ENCODE measurements at regions of chr14 and their contacts with region 1.

Region 1: DNA sequence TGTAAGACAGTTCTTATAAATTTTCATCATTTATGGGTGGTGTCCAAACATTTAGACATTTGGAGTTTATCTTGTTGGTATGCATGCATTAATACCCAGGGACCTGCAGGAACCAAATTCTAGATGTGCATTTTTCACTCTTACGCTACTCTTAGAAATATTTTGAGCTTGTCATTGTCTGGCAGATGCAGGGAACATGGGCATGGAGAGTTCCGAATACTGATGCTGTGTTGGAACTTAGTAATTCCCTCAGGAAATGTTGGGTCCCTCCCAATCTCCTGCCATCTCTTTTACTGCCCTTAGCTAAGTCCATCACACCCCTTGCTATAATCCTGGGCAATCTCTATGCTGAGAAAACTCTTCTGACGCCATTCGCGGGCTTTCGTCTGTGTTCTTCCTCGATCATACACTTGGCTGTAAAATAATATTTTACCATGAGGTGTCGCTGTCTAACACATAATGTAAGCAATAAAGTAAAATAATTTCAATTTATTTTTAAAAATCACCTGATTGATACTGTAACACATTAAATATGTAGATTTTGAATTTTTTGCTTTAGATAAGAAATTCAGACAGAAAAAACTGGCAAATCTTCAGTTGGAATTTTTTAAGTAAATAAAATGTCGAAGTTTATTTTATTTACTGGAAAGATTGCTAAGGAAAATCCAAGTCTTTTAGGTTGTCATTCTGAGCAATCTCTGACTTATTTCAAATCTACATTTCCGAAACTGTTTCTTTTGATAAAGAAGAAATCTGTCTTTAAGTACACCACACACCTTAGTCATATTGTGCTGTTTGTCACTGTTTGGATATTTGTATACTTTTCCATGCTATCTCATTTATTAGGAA is 304.1 kb upstream of the SSTR1 start:
- DNase-seq: peak; percentile 59
- ATAC-seq: peak; percentile 72
- H3K4me3 ChIP-seq: no peak overlapping the region
- H3K27ac ChIP-seq: no peak overlapping the region
- H3K4me1 ChIP-seq: 0 out of 2 replicates have a peak, but pooled peaks cover 2% of the 10 kb centered on the region
- H3K27me3 ChIP-seq: no peaks in the 10 kb centered on the region; the same call in 1 of the 2 replicates
- CTCF ChIP-seq: peak; percentile 77
- POLR2A ChIP-seq: no peak
- RAD21 ChIP-seq: peak; percentile 76

Region 2: DNA sequence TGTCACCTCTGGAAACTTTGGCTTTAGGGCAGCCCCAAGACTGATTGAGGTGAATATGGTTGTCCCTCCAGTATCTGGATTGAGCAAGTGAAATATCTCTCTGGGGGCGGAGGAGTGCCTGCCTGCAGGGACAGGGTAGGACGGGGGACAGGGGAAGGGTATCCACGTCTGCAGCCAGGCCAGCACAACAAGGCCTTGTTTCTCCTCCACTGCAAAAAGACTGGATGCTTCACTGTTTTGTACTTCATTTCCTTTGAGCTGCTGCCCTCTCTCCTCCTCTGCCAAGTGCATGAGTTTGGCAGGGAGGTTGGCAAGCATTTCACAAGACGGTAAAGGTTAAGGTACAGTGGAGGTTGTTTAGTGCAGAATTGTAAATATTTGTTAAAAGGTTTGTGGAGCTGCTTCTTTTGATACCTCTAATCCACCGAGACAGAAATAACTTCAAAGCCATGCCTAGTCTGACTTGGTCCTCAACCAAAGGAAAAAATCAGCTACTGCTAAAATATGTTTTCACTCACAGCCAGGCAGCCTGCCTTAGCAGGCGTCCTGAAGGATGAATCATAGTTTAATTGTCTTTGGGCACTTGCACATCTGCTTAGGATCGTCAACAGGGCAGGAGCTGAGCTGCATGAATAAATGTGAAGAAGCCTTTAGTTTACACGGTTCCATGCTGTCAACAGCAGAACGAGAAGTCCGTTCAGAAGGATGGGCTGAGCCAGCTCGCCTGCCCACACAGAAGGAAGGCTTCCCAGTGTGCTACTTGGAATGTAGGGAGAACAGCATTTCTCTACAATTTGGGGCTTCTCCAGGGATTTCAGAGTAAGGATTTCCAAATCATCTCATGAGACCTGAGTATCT is 38.5 kb before region 1 on chr14:
- CTCF ChIA-PET with region 1: no interaction called
- POLR2A ChIA-PET with region 1: no interaction called
- dilution Hi-C with region 1: no loop called
- in situ Hi-C with region 1: no loop called
- intact Hi-C with region 1: no loop called
- DNase-seq: peak; percentile 7
- ATAC-seq: peak; percentile 56
- H3K4me3 ChIP-seq: no peak overlapping the region
- H3K27ac ChIP-seq: no peak overlapping the region
- H3K4me1 ChIP-seq: no peaks in the 10 kb centered on the region
- H3K27me3 ChIP-seq: peaks cover 2% of the 10 kb centered on the region
- CTCF ChIP-seq: no peak
- POLR2A ChIP-seq: no peak
- RAD21 ChIP-seq: no peak

Region 3: GRCh38 chr14:37890095-37890494 is 13.5 kb before region 1 on chr14:
- CTCF ChIA-PET with region 1: no interaction called
- POLR2A ChIA-PET with region 1: no interaction called
- dilution Hi-C with region 1: no loop called
- in situ Hi-C with region 1: no loop called
- intact Hi-C with region 1: no loop called
- DNase-seq: no peak
- ATAC-seq: no peak
- H3K4me3 ChIP-seq: no peak overlapping the region
- H3K27ac ChIP-seq: no peak overlapping the region
- H3K4me1 ChIP-seq: no peaks in the 10 kb centered on the region
- H3K27me3 ChIP-seq: peaks cover 2% of the 10 kb centered on the region; the same call in 1 of the 2 replicates
- CTCF ChIP-seq: peak; percentile 29
- POLR2A ChIP-seq: no peak
- RAD21 ChIP-seq: no peak

Region 4: GRCh38 chr14:38208618-38209562 is 305.3 kb after region 1 on chr14:
- CTCF ChIA-PET with region 1: no interaction called
- POLR2A ChIA-PET with region 1: no interaction called
- dilution Hi-C with region 1: no loop called
- in situ Hi-C with region 1: loop called (anchors 10 kb)
- intact Hi-C with region 1: no loop called
- DNase-seq: peak; percentile 74
- ATAC-seq: peak; percentile 79
- H3K4me3 ChIP-seq: peak overlapping the region; percentile 61
- H3K27ac ChIP-seq: peak overlapping the region; percentile 8; the same call in 1 of the 2 replicates
- H3K4me1 ChIP-seq: peaks cover 11% of the 10 kb centered on the region; the same call in 1 of the 2 replicates
- H3K27me3 ChIP-seq: no peaks in the 10 kb centered on the region
- CTCF ChIP-seq: peak; percentile 53
- POLR2A ChIP-seq: no peak
- RAD21 ChIP-seq: peak; percentile 63

Region 5: DNA sequence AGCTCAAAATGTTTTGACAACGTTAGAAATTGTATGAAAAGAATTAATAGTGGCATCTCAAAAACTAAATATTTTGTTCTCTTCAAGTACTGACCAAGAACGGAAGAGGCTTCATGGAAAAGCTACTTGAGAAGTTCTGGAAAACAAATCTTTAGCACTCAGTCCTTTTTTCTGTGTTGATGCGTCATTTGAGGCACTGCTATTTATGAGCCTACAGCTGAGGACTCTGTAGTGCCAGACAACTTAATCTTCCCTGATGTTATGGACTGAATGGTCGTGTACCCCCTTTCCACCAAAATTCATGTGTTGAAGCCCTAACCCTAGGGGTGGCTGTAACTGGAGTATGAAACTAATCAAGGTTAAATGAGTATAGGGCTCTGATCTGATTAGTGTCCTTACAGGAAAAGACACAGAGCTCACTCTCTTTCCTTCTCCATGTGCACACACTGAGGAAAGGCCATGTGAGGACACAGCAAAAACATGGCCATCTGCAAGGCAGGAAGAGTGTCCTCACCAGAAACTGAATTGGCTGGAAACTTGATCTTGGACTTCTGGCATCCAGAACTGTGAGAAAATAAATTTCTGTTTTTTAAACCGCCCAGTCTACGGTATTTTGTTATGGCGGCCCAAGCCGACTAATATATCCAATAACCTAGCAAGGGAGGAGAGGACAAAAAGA is 689.3 kb after region 1 on chr14:
- CTCF ChIA-PET with region 1: no interaction called
- POLR2A ChIA-PET with region 1: no interaction called
- dilution Hi-C with region 1: no loop called
- in situ Hi-C with region 1: loop called (anchors 5 kb)
- intact Hi-C with region 1: no loop called
- DNase-seq: no peak
- ATAC-seq: no peak
- H3K4me3 ChIP-seq: no peak overlapping the region
- H3K27ac ChIP-seq: no peak overlapping the region
- H3K4me1 ChIP-seq: no peaks in the 10 kb centered on the region
- H3K27me3 ChIP-seq: no peaks in the 10 kb centered on the region
- CTCF ChIP-seq: no peak
- POLR2A ChIP-seq: no peak
- RAD21 ChIP-seq: no peak

Region 6: DNA sequence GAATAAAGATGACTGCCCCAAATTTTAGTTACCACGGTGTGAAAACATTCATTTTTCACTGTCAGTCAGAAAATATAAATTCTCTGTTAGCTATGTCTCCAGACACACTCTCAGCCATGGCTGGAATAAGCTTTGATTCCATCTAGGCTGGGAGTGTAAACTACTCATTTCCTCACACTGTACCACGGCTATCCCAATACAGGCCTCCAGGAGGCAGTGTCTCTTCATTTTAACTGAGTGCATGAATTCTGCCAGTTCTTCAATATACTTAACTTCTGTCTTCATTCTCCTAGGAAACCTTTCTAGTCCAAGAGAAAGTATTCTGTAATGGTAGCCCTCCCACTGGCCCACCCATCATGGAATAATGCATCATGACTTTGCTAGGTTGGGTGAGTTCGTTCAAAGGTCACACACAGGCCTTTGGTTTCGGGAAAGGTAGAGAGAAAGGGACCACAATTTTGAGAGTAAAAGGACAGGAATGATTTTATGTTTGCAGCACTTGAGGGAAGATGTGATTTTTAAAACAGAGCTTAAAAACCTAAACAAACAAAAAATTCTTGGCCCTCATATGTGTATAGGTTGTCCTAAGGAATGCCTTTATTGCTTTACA is 818.4 kb after region 1 on chr14:
- CTCF ChIA-PET with region 1: no interaction called
- POLR2A ChIA-PET with region 1: no interaction called
- dilution Hi-C with region 1: no loop called
- in situ Hi-C with region 1: no loop called
- intact Hi-C with region 1: loop called (anchors 5 kb)
- DNase-seq: peak; percentile 31
- ATAC-seq: peak; percentile 92
- H3K4me3 ChIP-seq: no peak overlapping the region
- H3K27ac ChIP-seq: no peak overlapping the region
- H3K4me1 ChIP-seq: no peaks in the 10 kb centered on the region
- H3K27me3 ChIP-seq: no peaks in the 10 kb centered on the region
- CTCF ChIP-seq: peak; percentile 69
- POLR2A ChIP-seq: no peak
- RAD21 ChIP-seq: peak; percentile 62